Activated naive CD4-positive, alpha-beta T cell treated with anti-CD3 and anti-CD28 coated beads for 36 hours (primary cell): ENCODE measurements at regions of chr2 and their contacts with region 1.

Region 1: GRCh38 chr2:61854474-61855182 is 768 bp upstream of the FAM161A start:
- DNase-seq: peak; percentile 95
- H3K4me3 Mint-ChIP-seq: peak overlapping the region; percentile 93
- H3K27ac Mint-ChIP-seq: peak overlapping the region; percentile 91
- H3K4me1 Mint-ChIP-seq: peaks cover 17% of the 10 kb centered on the region
- H3K27me3 Mint-ChIP-seq: no peaks in the 10 kb centered on the region

Region 2: GRCh38 chr2:60756191-60757041 is 1098.2 kb before region 1 on chr2 and contains the start of gene PAPOLG:
- CTCF ChIA-PET with region 1: no interaction called
- intact Hi-C with region 1: loop called (anchors 5 kb)
- DNase-seq: peak; percentile 99
- H3K4me3 Mint-ChIP-seq: peak within 1 kb of the TSS; percentile 99
- H3K27ac Mint-ChIP-seq: peak within 1 kb of the TSS; percentile 97
- H3K4me1 Mint-ChIP-seq: peaks cover 40% of the 10 kb centered on the region
- H3K27me3 Mint-ChIP-seq: no peaks in the 10 kb centered on the region
- total RNA-seq, gene PAPOLG: 14.1 to 16.1 TPM

Region 3: DNA sequence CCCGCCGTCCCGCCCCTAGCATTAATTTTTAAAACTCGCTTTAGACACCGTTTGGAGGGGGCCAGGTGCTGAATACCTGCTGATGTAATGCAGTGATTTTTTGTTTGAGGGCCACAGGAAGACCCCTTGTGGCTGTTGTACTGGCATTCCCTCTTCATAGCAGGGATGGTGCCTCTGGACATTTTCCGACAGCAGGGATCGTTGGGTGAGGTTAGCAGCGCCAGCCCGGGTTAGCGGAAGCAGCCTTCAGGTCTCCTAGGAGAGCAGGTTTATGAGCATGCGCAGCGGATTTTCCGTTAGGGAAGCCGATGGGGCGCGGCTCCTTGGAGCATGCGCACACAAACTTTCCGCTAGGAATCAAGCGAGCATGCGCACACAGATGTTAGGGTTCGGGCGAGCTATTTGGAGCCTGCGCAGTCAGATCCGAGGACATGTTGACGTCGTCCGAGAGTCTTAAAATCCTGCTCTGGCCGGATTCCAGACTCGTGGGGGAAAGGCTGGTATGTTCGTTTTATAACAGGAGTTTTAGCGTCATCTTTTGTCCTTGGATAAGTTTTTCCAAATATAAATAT is 709.8 kb before region 1 on chr2:
- CTCF ChIA-PET with region 1: no interaction called
- intact Hi-C with region 1: loop called (anchors 2 kb)
- DNase-seq: peak; percentile 97
- H3K4me3 Mint-ChIP-seq: peak overlapping the region; percentile 92
- H3K27ac Mint-ChIP-seq: peak overlapping the region; percentile 85
- H3K4me1 Mint-ChIP-seq: peaks cover 6% of the 10 kb centered on the region
- H3K27me3 Mint-ChIP-seq: no peaks in the 10 kb centered on the region

Region 4: GRCh38 chr2:61470965-61471904 is 383.4 kb before region 1 on chr2 and contains the start of gene USP34:
- CTCF ChIA-PET with region 1: no interaction called
- intact Hi-C with region 1: loop called (anchors 1 kb)
- DNase-seq: peak; percentile 94
- H3K4me3 Mint-ChIP-seq: peak within 1 kb of the TSS; percentile 98
- H3K27ac Mint-ChIP-seq: peak within 1 kb of the TSS; percentile 97
- H3K4me1 Mint-ChIP-seq: peaks cover 31% of the 10 kb centered on the region
- H3K27me3 Mint-ChIP-seq: no peaks in the 10 kb centered on the region
- total RNA-seq, gene USP34: 59.5 to 60.4 TPM

Region 5: GRCh38 chr2:61832183-61832841 is 22.3 kb before region 1 on chr2:
- CTCF ChIA-PET with region 1: no interaction called
- intact Hi-C with region 1: no loop called
- DNase-seq: no peak
- H3K4me3 Mint-ChIP-seq: no peak overlapping the region
- H3K27ac Mint-ChIP-seq: no peak overlapping the region
- H3K4me1 Mint-ChIP-seq: no peaks in the 10 kb centered on the region
- H3K27me3 Mint-ChIP-seq: no peaks in the 10 kb centered on the region

Region 6: GRCh38 chr2:61888267-61889055 is 33.8 kb after region 1 on chr2 and contains the start of gene CCT4:
- CTCF ChIA-PET with region 1: no interaction called
- intact Hi-C with region 1: loop called (anchors 1 kb)
- DNase-seq: peak; percentile 86
- H3K4me3 Mint-ChIP-seq: peak within 1 kb of the TSS; percentile 99
- H3K27ac Mint-ChIP-seq: peak within 1 kb of the TSS; percentile 98
- H3K4me1 Mint-ChIP-seq: peaks cover 34% of the 10 kb centered on the region
- H3K27me3 Mint-ChIP-seq: no peaks in the 10 kb centered on the region
- total RNA-seq, gene CCT4: 363 to 377 TPM

Region 7: GRCh38 chr2:62014102-62014501 is 159.5 kb after region 1 on chr2:
- CTCF ChIA-PET with region 1: no interaction called
- intact Hi-C with region 1: no loop called
- DNase-seq: no peak
- H3K4me3 Mint-ChIP-seq: no peak overlapping the region
- H3K27ac Mint-ChIP-seq: no peak overlapping the region
- H3K4me1 Mint-ChIP-seq: no peaks in the 10 kb centered on the region
- H3K27me3 Mint-ChIP-seq: no peaks in the 10 kb centered on the region

Region 8: DNA sequence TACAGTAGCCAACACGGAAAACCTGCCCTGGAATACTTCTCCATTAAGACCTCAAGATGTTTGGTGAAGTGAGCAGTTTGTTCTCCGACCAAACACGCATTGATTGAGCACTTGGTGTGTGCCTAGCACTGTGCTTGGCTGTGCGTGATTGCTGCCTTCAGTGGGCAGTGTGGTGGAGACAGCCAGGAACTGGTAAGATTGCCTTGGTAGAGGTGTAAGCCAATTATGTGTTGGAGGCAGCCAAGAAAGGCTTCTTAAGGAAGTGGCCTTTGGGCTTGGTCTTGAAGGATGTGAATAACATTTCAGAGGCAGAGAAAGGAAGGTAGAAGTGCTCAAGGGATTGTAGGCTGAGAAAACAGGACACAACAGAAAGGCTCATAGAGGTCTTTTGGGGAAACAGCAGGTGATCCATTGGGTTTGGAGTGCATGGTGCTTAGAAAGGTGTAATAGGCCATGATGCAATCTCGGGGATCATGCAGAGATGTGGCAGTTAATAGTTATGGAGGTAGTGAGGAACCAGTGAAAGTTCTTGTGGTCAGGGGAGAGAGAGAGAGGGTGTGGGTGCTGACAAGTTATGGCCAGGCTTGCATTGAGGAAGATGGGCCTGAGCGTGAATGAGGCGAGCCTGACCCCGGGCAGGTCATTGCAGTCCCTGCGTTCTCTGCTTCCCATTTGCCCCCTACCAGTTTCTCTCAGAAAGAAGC is 347.5 kb after region 1 on chr2:
- CTCF ChIA-PET with region 1: no interaction called
- intact Hi-C with region 1: loop called (anchors 1 kb)
- DNase-seq: peak; percentile 35
- H3K4me3 Mint-ChIP-seq: peak overlapping the region; percentile 17
- H3K27ac Mint-ChIP-seq: peak overlapping the region; percentile 97
- H3K4me1 Mint-ChIP-seq: peaks cover 79% of the 10 kb centered on the region
- H3K27me3 Mint-ChIP-seq: no peaks in the 10 kb centered on the region